ENCODE measurements at regions of chr10 and their contacts with region 1.

Region 1: GRCh38 chr10:45249978-45250693 is 65.3 kb downstream of the OR13A1 start:
- DNase-seq: peak; percentile 7
- ATAC-seq: peak; percentile 55
- H3K4me3 Mint-ChIP-seq: no peak overlapping the region
- H3K27ac Mint-ChIP-seq: no peak overlapping the region
- H3K4me1 Mint-ChIP-seq: peaks cover 8% of the 10 kb centered on the region
- H3K27me3 Mint-ChIP-seq: peaks cover 5% of the 10 kb centered on the region
- CTCF ChIP-seq: peak; percentile 71

Region 2: GRCh38 chr10:45180946-45181875 is 68.9 kb before region 1 on chr10:
- CTCF ChIA-PET with region 1: no interaction called
- POLR2A ChIA-PET with region 1: no interaction called
- intact Hi-C with region 1: no loop called
- DNase-seq: no peak
- ATAC-seq: no peak
- H3K4me3 Mint-ChIP-seq: no peak overlapping the region
- H3K27ac Mint-ChIP-seq: no peak overlapping the region
- H3K4me1 Mint-ChIP-seq: no peaks in the 10 kb centered on the region
- H3K27me3 Mint-ChIP-seq: no peaks in the 10 kb centered on the region
- CTCF ChIP-seq: no peak

Region 3: GRCh38 chr10:45235798-45236231 is 14.3 kb before region 1 on chr10:
- CTCF ChIA-PET with region 1: interaction called, 28 read pairs
- POLR2A ChIA-PET with region 1: interaction called, 3 read pairs
- intact Hi-C with region 1: no loop called
- DNase-seq: no peak
- ATAC-seq: no peak
- H3K4me3 Mint-ChIP-seq: no peak overlapping the region
- H3K27ac Mint-ChIP-seq: no peak overlapping the region
- H3K4me1 Mint-ChIP-seq: peaks cover 7% of the 10 kb centered on the region
- H3K27me3 Mint-ChIP-seq: peaks cover 4% of the 10 kb centered on the region
- CTCF ChIP-seq: no peak

Region 4: GRCh38 chr10:45261946-45262345 is 11.8 kb after region 1 on chr10:
- CTCF ChIA-PET with region 1: interaction called, 11 read pairs
- POLR2A ChIA-PET with region 1: interaction called, 3 read pairs
- intact Hi-C with region 1: no loop called
- DNase-seq: no peak
- ATAC-seq: no peak
- H3K4me3 Mint-ChIP-seq: no peak overlapping the region
- H3K27ac Mint-ChIP-seq: no peak overlapping the region
- H3K4me1 Mint-ChIP-seq: no peaks in the 10 kb centered on the region
- H3K27me3 Mint-ChIP-seq: peaks cover 16% of the 10 kb centered on the region
- CTCF ChIP-seq: no peak

Region 5: DNA sequence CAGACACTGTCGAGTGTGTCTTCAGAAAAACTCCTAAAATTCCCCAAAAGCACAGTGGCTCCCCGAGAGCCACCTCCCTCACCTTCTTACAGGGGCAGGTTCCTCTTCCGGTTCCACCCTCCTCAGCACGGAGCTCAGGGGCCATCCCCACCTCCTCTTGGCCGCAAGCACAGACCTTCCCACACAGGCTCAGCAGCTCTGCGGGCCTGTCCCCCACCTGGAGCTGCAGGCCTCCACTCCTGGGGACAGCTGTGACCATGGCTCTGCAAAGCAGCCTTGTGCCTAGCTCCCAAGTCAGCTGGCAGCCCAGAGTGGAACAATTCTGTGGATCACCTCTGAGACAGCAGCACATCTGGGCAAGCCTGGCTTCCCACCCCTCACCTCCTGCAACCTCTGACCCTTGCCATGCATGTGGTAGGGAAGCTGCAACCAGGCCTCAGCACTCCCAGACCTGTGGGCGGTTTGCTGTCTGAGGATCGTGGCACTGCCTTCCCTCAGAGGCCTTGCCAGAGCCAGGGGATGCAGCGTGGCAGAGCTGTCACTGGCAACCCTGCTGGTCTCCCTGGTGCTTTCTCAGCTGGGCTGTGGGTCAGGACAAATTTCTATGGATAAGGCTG is 203.6 kb after region 1 on chr10:
- CTCF ChIA-PET with region 1: interaction called, 3 read pairs
- POLR2A ChIA-PET with region 1: no interaction called
- intact Hi-C with region 1: loop called (anchors 10 kb)
- DNase-seq: no peak
- ATAC-seq: no peak
- H3K4me3 Mint-ChIP-seq: no peak overlapping the region
- H3K27ac Mint-ChIP-seq: no peak overlapping the region
- H3K4me1 Mint-ChIP-seq: peaks cover 11% of the 10 kb centered on the region
- H3K27me3 Mint-ChIP-seq: no peaks in the 10 kb centered on the region
- CTCF ChIP-seq: no peak

Region 6: DNA sequence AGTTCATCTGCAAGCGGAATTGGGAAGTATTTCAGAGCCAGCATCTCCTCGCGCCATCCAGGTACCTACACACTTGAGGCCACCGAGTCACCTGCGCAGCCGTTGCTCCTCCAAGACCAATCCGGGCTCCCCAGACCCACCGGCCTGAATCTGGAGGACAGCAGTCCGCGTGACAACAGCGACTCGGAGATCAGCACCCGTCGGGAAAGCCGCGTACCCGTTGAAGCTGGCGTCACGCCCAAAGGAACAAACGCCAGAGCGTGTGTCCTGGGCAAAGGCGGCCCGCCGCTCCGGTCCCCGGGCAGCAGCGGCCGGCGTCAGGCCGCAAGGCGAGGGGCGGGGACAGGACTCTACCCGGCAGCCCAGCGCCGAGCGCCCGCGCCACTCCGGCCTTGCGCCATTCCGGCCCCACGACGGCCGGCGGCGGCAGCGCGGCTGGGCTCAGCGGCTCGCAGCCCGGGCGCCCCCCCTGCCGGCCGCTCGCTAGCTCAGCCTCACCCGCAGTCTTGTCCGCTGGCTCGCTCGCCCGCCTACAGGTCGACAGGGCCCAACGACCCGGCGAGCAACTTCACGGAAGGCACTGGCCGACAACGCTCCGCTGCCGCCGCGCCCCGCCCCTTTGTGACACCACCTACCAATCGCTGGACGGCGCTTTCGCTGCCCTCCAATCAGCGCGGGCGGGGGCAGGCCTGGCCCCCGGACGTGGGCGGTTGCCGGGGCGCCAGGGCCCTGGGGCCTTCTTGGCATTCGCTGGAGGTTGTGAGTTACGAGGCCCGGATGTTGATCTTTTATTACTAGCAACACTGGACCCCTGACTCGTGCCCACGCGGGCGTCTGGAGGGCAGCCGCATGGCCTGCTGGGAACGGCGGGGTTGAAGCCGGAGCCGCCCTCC is 422.3 kb after region 1 on chr10 and contains the start of gene ZFAND4:
- CTCF ChIA-PET with region 1: interaction called, 9 read pairs
- POLR2A ChIA-PET with region 1: no interaction called
- intact Hi-C with region 1: loop called (anchors 5 kb)
- DNase-seq: peak; percentile 97
- ATAC-seq: peak; percentile 96
- H3K4me3 Mint-ChIP-seq: peak within 1 kb of the TSS; percentile 93
- H3K27ac Mint-ChIP-seq: peak within 1 kb of the TSS; percentile 90
- H3K4me1 Mint-ChIP-seq: peaks cover 32% of the 10 kb centered on the region
- H3K27me3 Mint-ChIP-seq: no peaks in the 10 kb centered on the region
- CTCF ChIP-seq: peak; percentile 62
- total RNA-seq, gene ZFAND4: 11.5 to 13.5 TPM

Measured in activated CD8-positive, alpha-beta T cell treated with anti-CD3 and anti-CD28 coated beads for 36 hours (primary cell).